ENCODE measurements at regions of chrX and their contacts with region 1.

Region 1: GRCh38 chrX:1453951-1454785 is 1.5 kb upstream of the ASMTL start:
- DNase-seq: peak; percentile 92
- ATAC-seq: peak; percentile 29
- H3K4me3 Mint-ChIP-seq: peak overlapping the region; percentile 63
- H3K27ac Mint-ChIP-seq: peak overlapping the region; percentile 50
- H3K4me1 Mint-ChIP-seq: peaks cover 32% of the 10 kb centered on the region
- H3K27me3 Mint-ChIP-seq: no peaks in the 10 kb centered on the region
- CTCF ChIP-seq: peak; percentile 37

Region 2: GRCh38 chrX:1323315-1323714 is 130.9 kb before region 1 on chrX:
- CTCF ChIA-PET with region 1: no interaction called
- POLR2A ChIA-PET with region 1: no interaction called
- intact Hi-C with region 1: loop called (anchors 1 kb)
- DNase-seq: peak; percentile 28
- ATAC-seq: peak; percentile 87
- H3K4me3 Mint-ChIP-seq: peak overlapping the region; percentile 3
- H3K27ac Mint-ChIP-seq: peak overlapping the region; percentile 21
- H3K4me1 Mint-ChIP-seq: peaks cover 13% of the 10 kb centered on the region
- H3K27me3 Mint-ChIP-seq: peaks cover 9% of the 10 kb centered on the region
- CTCF ChIP-seq: no peak

Region 3: DNA sequence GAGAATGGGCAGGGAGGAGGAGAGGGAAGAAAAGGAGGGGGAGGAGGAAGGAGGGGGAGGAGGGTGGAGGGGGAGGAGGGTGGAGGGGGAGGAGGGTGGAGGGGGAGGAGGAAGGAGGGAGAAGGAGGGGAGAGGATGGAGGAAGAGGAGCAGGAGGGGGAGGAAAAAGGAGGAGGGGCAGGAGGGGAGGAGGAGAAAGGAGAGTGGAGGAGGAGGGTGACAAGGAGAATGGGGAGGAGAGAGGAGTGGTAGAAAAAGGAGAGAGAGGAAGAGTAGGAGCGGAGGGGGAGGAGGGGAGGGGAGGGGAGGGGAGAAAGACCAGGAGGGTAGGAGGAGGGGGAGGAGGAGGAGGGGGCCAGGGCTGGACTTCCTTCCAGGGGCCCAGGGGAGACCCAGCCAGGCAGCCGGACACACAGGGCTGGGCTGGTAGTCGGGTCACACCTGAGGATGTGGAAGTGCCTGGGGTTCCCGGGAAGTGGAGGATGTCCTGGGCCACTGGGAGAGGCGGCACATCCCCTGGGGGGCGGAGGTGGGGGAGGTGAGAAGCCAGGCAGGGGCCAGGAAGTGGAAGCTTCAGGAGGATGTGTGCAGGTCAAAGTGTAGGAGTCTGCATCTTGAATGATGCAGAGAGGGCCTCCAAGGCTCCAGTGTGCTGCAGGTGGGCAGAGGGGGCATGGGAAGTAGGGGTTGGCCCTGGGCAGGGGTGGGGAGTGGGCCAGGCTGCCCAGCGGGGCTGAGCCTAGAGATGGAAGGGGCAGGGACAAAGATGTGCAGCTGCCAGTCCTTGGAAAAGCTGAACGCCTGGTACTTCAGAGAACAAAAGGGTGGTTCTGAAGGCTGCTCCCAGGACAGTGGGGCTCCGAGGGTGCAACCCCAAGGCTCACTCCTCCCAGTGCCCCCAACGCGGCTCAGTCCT is 98.8 kb before region 1 on chrX:
- CTCF ChIA-PET with region 1: no interaction called
- POLR2A ChIA-PET with region 1: no interaction called
- intact Hi-C with region 1: no loop called
- DNase-seq: no peak
- ATAC-seq: peak; percentile 10
- H3K4me3 Mint-ChIP-seq: no peak overlapping the region
- H3K27ac Mint-ChIP-seq: no peak overlapping the region
- H3K4me1 Mint-ChIP-seq: no peaks in the 10 kb centered on the region
- H3K27me3 Mint-ChIP-seq: no peaks in the 10 kb centered on the region
- CTCF ChIP-seq: no peak

Region 4: GRCh38 chrX:1368385-1368698 is 85.8 kb before region 1 on chrX:
- CTCF ChIA-PET with region 1: no interaction called
- POLR2A ChIA-PET with region 1: no interaction called
- intact Hi-C with region 1: no loop called
- DNase-seq: no peak
- ATAC-seq: no peak
- H3K4me3 Mint-ChIP-seq: no peak overlapping the region
- H3K27ac Mint-ChIP-seq: no peak overlapping the region
- H3K4me1 Mint-ChIP-seq: no peaks in the 10 kb centered on the region
- H3K27me3 Mint-ChIP-seq: no peaks in the 10 kb centered on the region
- CTCF ChIP-seq: no peak

Region 5: GRCh38 chrX:1491851-1492349 is 37.7 kb after region 1 on chrX:
- CTCF ChIA-PET with region 1: no interaction called
- POLR2A ChIA-PET with region 1: no interaction called
- intact Hi-C with region 1: loop called (anchors 1 kb)
- DNase-seq: peak; percentile 61
- ATAC-seq: peak; percentile 66
- H3K4me3 Mint-ChIP-seq: peak overlapping the region; percentile 88
- H3K27ac Mint-ChIP-seq: peak overlapping the region; percentile 88
- H3K4me1 Mint-ChIP-seq: peaks cover 69% of the 10 kb centered on the region
- H3K27me3 Mint-ChIP-seq: no peaks in the 10 kb centered on the region
- CTCF ChIP-seq: no peak

Region 6: DNA sequence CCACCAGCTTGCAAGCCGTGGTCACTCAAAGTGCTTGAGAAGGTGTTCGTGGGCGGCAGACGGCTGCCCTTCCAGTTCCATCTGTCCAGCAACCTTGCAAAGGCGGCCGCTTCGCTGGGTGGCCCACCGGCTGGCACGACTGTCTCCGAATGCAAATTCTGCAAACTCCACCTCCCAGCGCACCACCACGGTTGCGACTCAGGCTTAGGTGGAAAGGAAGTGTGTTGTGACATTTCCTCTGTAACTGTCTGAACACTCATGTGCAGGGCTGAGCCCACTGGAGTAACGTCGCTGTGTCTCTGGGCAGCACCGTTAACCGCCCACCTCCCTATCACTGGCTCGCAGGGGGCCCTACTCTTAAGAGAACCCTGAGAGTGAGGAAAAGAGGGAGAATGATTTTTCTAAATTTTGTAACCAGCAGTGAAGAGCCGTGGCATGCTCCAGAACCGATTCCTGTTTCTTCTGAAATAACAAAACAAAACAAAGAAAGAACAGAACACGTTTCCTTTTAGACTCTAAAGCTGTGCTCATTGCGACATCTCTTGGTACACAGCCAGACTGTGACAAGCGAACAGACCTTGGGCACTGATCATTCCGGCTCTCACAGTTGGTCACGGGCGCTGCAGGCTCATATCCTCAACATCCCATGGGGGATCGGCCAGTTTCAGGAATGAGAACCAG is 83.0 kb after region 1 on chrX and contains the start of gene P2RY8:
- CTCF ChIA-PET with region 1: no interaction called
- POLR2A ChIA-PET with region 1: no interaction called
- intact Hi-C with region 1: loop called (anchors 1 kb)
- DNase-seq: peak; percentile 72
- ATAC-seq: peak; percentile 76
- H3K4me3 Mint-ChIP-seq: peak within 1 kb of the TSS; percentile 98
- H3K27ac Mint-ChIP-seq: peak within 1 kb of the TSS; percentile 96
- H3K4me1 Mint-ChIP-seq: peaks cover 20% of the 10 kb centered on the region
- H3K27me3 Mint-ChIP-seq: no peaks in the 10 kb centered on the region
- CTCF ChIP-seq: no peak
- total RNA-seq, gene P2RY8: 315 and 332 TPM in 2 replicates

Region 7: GRCh38 chrX:2176733-2177132 is 722.6 kb after region 1 on chrX:
- CTCF ChIA-PET with region 1: no interaction called
- POLR2A ChIA-PET with region 1: no interaction called
- intact Hi-C with region 1: loop called (anchors 5 kb)
- DNase-seq: no peak
- ATAC-seq: no peak
- H3K4me3 Mint-ChIP-seq: no peak overlapping the region
- H3K27ac Mint-ChIP-seq: no peak overlapping the region
- H3K4me1 Mint-ChIP-seq: peaks cover 22% of the 10 kb centered on the region
- H3K27me3 Mint-ChIP-seq: no peaks in the 10 kb centered on the region
- CTCF ChIP-seq: no peak

Region 8: DNA sequence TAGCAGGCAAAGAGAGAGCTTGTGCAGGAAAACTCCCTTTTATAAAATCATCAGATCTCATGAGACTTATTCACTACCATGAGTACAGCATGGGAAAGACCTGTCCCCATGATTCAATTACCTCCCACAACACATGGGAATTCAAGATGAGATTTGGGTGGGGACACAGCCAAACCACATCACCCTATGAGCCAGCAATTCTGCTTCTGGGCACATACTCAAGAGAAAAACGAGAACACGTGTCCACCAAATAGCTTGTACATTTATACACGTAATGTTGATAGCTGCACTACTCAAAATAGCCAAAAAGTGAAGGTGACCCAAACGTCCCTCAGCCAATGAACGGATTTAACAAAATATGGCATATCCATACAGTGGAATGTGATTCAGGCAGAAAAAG is 1141.1 kb after region 1 on chrX:
- CTCF ChIA-PET with region 1: no interaction called
- POLR2A ChIA-PET with region 1: no interaction called
- intact Hi-C with region 1: loop called (anchors 1 kb)
- DNase-seq: no peak
- ATAC-seq: no peak
- H3K4me3 Mint-ChIP-seq: no peak overlapping the region
- H3K27ac Mint-ChIP-seq: no peak overlapping the region
- H3K4me1 Mint-ChIP-seq: peaks cover 6% of the 10 kb centered on the region
- H3K27me3 Mint-ChIP-seq: no peaks in the 10 kb centered on the region
- CTCF ChIP-seq: no peak